GM10248 (cell line): ENCODE measurements at regions of chr7 and their contacts with region 1.

Region 1: DNA sequence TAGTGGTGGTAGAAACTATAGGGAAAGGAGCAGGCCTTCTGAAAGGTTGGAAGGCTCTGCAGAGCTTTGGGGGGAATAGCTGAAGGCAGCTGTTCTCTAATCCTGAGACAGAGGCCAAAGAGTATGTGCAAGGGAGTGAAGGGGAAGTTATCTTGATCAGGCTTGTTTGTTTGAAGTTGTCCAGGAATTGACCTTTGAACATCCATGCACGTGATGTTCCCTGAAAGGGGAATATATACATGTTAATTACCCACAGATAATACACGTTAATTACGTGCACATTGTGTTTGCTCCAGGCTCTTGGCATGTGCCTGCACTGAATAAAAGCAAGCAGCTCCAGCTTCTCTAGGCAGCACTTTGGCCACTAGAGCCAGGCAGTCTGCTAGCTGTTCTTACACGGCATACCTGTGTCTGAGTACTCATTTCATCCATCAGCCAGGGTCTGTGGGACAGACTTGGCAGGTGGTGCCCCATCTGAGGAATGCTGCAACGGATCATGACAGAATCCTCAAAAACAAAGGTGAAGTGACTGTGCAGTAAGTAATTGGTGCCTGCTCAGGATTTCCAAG is 18.0 kb upstream of the STARD3NL start:
- DNase-seq: no peak
- CTCF ChIP-seq: no peak

Region 2: DNA sequence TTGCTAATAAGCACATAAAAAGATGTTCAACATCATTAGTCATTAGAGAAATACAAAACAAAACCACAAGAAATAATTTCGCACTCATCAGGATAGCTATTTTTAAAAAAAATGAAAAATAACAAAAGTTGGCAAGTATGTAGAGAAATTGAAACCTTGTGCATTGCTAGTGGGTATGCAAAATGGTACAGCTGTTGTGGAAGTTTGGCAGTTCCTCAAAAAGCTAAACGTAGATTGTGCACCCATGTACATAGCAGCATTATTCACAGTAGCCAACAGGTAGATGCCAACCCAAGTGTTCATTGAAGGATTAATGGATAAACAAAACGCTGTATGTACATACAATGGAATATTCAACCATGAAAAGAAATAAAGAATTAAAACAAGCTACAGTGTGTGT is 17.4 kb before region 1 on chr7:
- CTCF ChIA-PET with region 1: interaction called, 15 read pairs
- POLR2A ChIA-PET with region 1: no interaction called
- DNase-seq: no peak
- CTCF ChIP-seq: no peak

Region 3: GRCh38 chr7:38206071-38206470 is 46.0 kb after region 1 on chr7:
- CTCF ChIA-PET with region 1: no interaction called
- POLR2A ChIA-PET with region 1: no interaction called
- DNase-seq: no peak
- CTCF ChIP-seq: no peak